ENCODE measurements at regions of chr1 and their contacts with region 1.

Region 1: GRCh38 chr1:151251656-151252470 is 2.7 kb upstream of the PSMD4 start:
- DNase-seq: peak; percentile 86
- ATAC-seq: peak; percentile 62
- H3K4me3 ChIP-seq: no peak overlapping the region
- H3K27ac ChIP-seq: no peak overlapping the region
- H3K4me1 ChIP-seq: peaks cover 5% of the 10 kb centered on the region; the same call in 1 of the 2 replicates
- H3K27me3 ChIP-seq: no peaks in the 10 kb centered on the region
- CTCF ChIP-seq: peak; percentile 94

Region 2: DNA sequence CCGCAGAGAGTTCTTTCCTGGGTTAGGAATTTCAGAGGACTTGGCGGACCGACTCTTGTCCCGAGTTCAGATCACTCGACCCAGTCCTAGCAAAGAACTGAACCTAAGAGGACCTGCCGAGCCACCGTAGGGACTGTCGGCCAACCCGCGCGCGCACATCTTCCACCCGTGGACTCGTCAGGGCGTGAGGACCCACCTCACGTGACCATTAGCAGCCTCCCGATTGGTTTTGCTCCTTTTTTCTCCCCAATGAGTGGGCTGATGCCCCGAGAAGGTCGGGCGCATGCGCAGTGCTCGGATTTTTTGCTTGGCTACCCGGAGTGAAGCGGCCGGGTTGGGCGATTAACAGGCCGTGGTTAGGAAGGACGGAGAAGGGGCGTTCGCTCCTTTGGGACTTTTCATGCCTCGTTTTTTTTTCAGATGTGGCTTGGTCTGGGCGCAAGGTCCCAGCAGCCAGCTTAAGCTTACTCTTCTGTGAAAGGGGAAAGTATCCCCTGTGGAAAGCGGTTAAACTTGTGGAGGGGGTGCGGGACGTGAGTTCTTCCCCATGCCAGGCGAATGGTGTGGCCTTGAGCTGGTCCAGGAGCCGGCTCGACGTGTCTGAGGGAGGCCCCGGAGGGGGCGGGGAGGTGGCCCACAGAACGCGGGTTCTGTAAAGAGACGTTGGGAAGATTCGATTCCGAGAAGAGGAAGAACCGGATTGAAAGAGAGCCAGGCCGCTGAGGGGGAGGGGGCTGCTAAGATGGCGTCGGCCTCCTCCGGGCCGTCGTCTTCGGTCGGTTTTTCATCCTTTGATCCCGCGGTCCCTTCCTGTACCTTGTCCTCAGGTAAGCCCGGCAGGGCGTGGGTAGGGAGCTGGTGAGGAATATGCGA is 53.4 kb before region 1 on chr1 and contains the start of gene PIP5K1A:
- CTCF ChIA-PET with region 1: interaction called, 4 read pairs
- POLR2A ChIA-PET with region 1: interaction called, 13 read pairs
- intact Hi-C with region 1: loop called (anchors 1 kb)
- DNase-seq: peak; percentile 99
- ATAC-seq: peak; percentile 64
- H3K4me3 ChIP-seq: peak within 1 kb of the TSS; percentile 96
- H3K27ac ChIP-seq: peak within 1 kb of the TSS; percentile 83
- H3K4me1 ChIP-seq: peaks cover 37% of the 10 kb centered on the region
- H3K27me3 ChIP-seq: no peaks in the 10 kb centered on the region
- CTCF ChIP-seq: no peak
- total RNA-seq, gene PIP5K1A: 63.3 and 78.3 TPM in 2 replicates

Measured in PC-3 (cell line).